BJ (cell line): ENCODE measurements at regions of chr16 and their contacts with region 1.

Region 1: GRCh38 chr16:27222249-27223225 is 19.2 kb downstream of the KDM8 start:
- DNase-seq: peak; percentile 55
- H3K4me3 ChIP-seq: no peak overlapping the region
- H3K27me3 ChIP-seq: no peaks in the 10 kb centered on the region
- CTCF ChIP-seq: peak; percentile 1; the same call in 1 of the 2 replicates

Region 2: DNA sequence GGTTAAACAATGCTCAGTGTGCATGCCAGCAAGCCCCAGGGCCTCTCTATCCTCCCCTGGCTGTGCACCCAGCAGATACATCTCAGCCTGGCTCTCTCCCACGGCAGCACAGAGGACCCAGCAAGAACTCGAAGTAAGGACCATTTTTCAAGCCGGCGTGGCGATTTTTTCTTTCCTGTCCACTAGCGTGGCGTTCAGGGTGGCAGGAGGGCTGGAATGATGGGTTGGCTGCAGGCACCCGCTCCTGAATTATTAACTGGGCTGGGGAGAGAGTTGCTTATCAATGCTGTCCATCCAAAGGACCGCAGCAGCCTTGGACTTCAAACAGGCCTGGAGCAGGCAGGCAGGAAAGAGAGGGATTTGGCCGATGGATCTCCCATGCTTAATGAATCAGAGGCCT is 148.9 kb before region 1 on chr16:
- CTCF ChIA-PET with region 1: no interaction called
- POLR2A ChIA-PET with region 1: no interaction called
- DNase-seq: no peak
- H3K4me3 ChIP-seq: no peak overlapping the region
- H3K27me3 ChIP-seq: no peaks in the 10 kb centered on the region; the same call in 1 of the 2 replicates
- CTCF ChIP-seq: no peak

Region 3: GRCh38 chr16:27268376-27269299 is 46.1 kb after region 1 on chr16 and contains the start of gene NSMCE1:
- CTCF ChIA-PET with region 1: no interaction called
- POLR2A ChIA-PET with region 1: interaction called, 23 read pairs
- DNase-seq: peak; percentile 66
- H3K4me3 ChIP-seq: peak within 1 kb of the TSS; percentile 95
- H3K27me3 ChIP-seq: no peaks in the 10 kb centered on the region
- CTCF ChIP-seq: peak; percentile 43
- polyA plus RNA-seq, gene NSMCE1: 31.7 and 34.3 TPM in 2 replicates

Region 4: GRCh38 chr16:27355610-27356009 is 133.1 kb after region 1 on chr16:
- CTCF ChIA-PET with region 1: no interaction called
- POLR2A ChIA-PET with region 1: no interaction called
- DNase-seq: no peak
- H3K4me3 ChIP-seq: no peak overlapping the region
- H3K27me3 ChIP-seq: no peaks in the 10 kb centered on the region
- CTCF ChIP-seq: peak; percentile 37

Region 5: DNA sequence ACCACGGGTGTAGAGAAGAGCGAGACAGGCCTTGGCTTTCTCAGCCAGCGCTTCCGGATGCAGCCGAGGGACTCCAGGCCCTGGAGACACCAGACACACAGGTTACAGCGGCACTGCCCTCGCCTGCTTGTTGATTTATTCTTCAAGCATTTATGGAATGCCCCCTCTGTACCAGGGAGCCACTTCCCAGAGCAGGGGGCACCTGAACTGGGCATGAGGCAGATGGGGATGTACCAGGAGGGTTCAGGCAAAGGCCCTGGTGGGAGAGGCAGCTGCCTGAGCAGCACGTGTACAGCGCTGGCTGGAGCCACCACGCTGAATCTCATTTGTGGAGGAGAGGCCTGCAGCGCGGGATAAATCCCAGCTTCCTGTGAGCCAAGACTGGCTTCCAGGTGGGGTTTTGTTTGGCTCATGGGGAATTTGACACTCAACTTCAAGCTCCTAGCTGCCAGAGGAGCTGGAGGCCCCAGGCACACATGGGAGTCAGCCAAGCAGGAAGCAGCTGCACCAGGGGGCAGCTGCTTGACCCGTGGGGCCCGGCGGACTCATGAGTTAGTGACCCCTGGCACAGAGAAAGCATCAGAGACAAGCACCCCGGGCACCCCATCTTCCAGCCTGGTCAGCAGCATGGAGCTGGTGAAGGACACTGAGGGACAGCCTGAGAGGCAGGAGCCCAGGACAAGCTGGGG is 239.1 kb after region 1 on chr16:
- CTCF ChIA-PET with region 1: no interaction called
- POLR2A ChIA-PET with region 1: no interaction called
- DNase-seq: no peak
- H3K4me3 ChIP-seq: no peak overlapping the region
- H3K27me3 ChIP-seq: no peaks in the 10 kb centered on the region
- CTCF ChIP-seq: no peak